A549 (cell line): ENCODE measurements at regions of chr4 and their contacts with region 1.

Region 1: DNA sequence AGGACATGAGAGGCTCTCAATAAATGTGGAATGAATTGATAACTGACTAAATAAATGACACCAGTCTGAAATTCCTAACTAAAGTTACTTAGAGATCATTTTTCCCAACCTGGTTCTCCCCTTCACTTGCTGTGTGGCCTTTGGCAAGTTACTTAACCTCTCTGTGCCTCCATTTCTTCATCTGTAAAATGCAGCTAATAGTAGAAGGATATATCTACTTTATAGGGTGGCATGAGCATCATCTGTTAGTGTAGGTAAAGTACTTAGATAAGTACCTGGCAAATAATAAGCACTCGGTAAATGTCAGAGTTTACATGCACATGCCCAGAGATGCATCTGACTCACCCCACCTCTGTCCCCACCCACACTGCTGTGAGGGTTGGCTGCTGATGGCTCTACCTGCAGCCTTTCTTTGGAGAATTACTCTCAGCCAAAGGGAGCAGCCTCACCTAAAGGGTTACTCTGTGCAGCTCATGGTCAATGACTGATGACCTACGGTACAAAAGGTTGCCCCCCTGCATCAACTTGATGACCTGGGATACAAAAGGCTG is 139.3 kb downstream of the CHIC2 start:
- DNase-seq: no peak
- ATAC-seq: no peak
- H3K4me3 ChIP-seq: no peak overlapping the region
- H3K27ac ChIP-seq: no peak overlapping the region
- H3K4me1 ChIP-seq: peaks cover 16% of the 10 kb centered on the region; the same call in 1 of the 3 replicates
- CTCF ChIP-seq: no peak
- EP300 ChIP-seq: no peak
- POLR2A ChIP-seq: no peak
- RAD21 ChIP-seq: no peak

Region 2: GRCh38 chr4:54015423-54016030 is 90.4 kb after region 1 on chr4:
- CTCF ChIA-PET with region 1: no interaction called
- POLR2A ChIA-PET with region 1: no interaction called
- DNase-seq: no peak
- ATAC-seq: no peak
- H3K4me3 ChIP-seq: no peak overlapping the region
- H3K27ac ChIP-seq: no peak overlapping the region
- H3K4me1 ChIP-seq: no peaks in the 10 kb centered on the region
- CTCF ChIP-seq: no peak
- EP300 ChIP-seq: no peak
- POLR2A ChIP-seq: no peak
- RAD21 ChIP-seq: no peak

Region 3: DNA sequence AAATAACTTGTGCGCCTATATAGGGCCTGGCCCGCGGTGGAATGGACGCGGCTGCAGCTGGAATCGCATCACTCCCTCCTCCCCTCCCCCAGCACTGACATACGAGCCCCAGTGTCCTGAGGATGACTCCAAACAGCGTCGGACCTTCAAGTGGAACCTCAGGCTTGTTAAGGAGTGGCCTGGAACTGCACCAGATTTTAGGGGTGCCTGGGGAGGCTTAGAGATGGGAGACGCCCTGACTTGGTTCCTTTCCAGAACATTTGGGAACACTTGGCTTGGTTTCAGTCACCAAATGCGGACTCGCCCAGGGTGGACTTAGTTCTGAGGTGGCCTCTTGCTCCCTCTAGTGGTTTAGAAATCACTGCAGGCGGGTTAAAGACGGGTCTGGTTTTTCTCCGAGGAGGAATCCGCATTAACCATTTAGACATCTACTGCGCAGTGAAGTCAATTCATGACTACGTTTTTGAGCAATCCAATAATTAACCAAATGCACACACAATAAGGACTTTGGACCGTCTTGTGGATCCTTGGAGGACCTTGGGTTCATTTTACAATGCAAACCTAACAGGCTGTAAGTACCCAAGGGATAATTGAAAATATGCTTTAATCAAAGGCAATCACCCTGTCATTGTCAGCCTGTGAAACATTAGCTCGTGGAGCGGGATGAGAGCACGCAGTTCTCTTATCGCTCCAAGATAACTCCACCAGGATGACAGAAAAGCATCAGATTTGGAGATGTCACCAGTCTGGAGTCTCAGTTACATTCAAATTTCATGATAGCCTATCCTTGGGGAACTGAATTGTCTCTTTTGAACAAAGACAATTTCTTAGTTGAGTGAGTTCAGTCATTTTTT is 292.7 kb after region 1 on chr4:
- CTCF ChIA-PET with region 1: interaction called, 82 read pairs
- POLR2A ChIA-PET with region 1: no interaction called
- DNase-seq: peak; percentile 61 to 72
- ATAC-seq: peak; percentile 93 to 97
- H3K4me3 ChIP-seq: peak overlapping the region; percentile 45
- H3K27ac ChIP-seq: peak overlapping the region; percentile 64 to 76
- H3K4me1 ChIP-seq: 0 out of 3 replicates have a peak, but pooled peaks cover 4% of the 10 kb centered on the region
- CTCF ChIP-seq: peak; percentile 75
- EP300 ChIP-seq: no peak
- POLR2A ChIP-seq: no peak
- RAD21 ChIP-seq: peak; percentile 87 to 91